ENCODE measurements at regions of chr15 and their contacts with region 1.

Region 1: GRCh38 chr15:86743283-86743903 is 663.7 kb downstream of the AGBL1 start:
- DNase-seq: peak; percentile 63
- ATAC-seq: no peak
- H3K4me3 ChIP-seq: no peak overlapping the region
- H3K27ac ChIP-seq: no peak overlapping the region
- H3K4me1 ChIP-seq: no peaks in the 10 kb centered on the region
- H3K27me3 ChIP-seq: no peaks in the 10 kb centered on the region
- CTCF ChIP-seq: peak; percentile 69

Region 2: GRCh38 chr15:86624261-86625036 is 118.9 kb before region 1 on chr15:
- CTCF ChIA-PET with region 1: no interaction called
- POLR2A ChIA-PET with region 1: no interaction called
- intact Hi-C with region 1: loop called (anchors 2 kb)
- DNase-seq: peak; percentile 94
- ATAC-seq: peak; percentile 84
- H3K4me3 ChIP-seq: no peak overlapping the region
- H3K27ac ChIP-seq: no peak overlapping the region
- H3K4me1 ChIP-seq: peaks cover 18% of the 10 kb centered on the region
- H3K27me3 ChIP-seq: no peaks in the 10 kb centered on the region
- CTCF ChIP-seq: peak; percentile 77